Naive thymus-derived CD8-positive, alpha-beta T cell (primary cell): ENCODE measurements at regions of chr1 and their contacts with region 1.

Region 1: DNA sequence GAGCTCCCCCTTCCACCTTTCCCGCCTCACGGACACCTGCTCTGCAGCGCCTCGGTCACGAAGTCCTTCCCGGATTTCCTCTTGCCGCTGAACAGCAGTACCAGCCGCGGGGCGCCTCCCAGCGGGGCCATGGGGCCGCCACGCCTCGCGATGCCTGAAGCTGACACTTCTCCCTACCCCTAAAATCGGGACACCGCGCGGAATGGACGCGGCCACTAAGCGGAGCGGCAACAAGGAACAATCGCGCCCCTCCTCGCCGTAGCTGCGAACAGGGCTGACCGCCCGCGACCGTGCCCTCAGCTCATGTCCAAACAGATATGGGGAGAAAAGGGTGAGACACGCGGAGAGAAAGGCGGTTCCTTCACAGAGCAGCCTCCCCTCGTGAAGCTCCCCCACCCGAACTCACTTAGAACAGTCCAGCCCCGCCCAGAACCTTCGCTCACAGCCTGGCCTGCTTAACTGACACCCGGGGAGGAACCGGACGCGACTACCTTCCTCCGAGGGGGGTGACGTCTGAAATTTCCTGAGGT is at the start of gene PMVK:
- DNase-seq: peak in 9 of 10 donors; percentile 84 to 98 (median 95)
- ATAC-seq: peak; percentile 76 to 83
- H3K4me3 Mint-ChIP-seq: peak within 1 kb of the TSS; percentile 86 to 100 (median 98)
- H3K27ac Mint-ChIP-seq: peak within 1 kb of the TSS; percentile 98 to 100 (median 99)
- H3K4me1 Mint-ChIP-seq: peaks cover 20 to 64% (median 53%) of the 10 kb centered on the region in 4 donors
- H3K27me3 Mint-ChIP-seq: no peaks in the 10 kb centered on the region
- polyA plus RNA-seq, gene PMVK: 41.0 to 45.7 (median 45.1) TPM

Region 2: GRCh38 chr1:154948079-154948478 is 11.5 kb after region 1 on chr1:
- POLR2A ChIA-PET with region 1: interaction called, 87 read pairs
- DNase-seq: no peak
- ATAC-seq: no peak
- H3K4me3 Mint-ChIP-seq: no peak overlapping the region
- H3K27ac Mint-ChIP-seq: peak overlapping the region in 4 of 10 donors; percentile 40 to 92 (median 60)
- H3K4me1 Mint-ChIP-seq: peaks cover 35 to 60% (median 56%) of the 10 kb centered on the region in 4 donors
- H3K27me3 Mint-ChIP-seq: no peaks in the 10 kb centered on the region

Region 3: GRCh38 chr1:154974063-154974807 is 37.6 kb after region 1 on chr1 and contains the start of gene CKS1B:
- POLR2A ChIA-PET with region 1: interaction called, 20 read pairs
- DNase-seq: peak; percentile 86 to 99 (median 98)
- ATAC-seq: peak; percentile 88 to 90
- H3K4me3 Mint-ChIP-seq: no peak within 1 kb of the TSS
- H3K27ac Mint-ChIP-seq: no peak within 1 kb of the TSS
- H3K4me1 Mint-ChIP-seq: peaks cover 16 to 33% (median 30%) of the 10 kb centered on the region in 4 donors
- H3K27me3 Mint-ChIP-seq: no peaks in the 10 kb centered on the region
- polyA plus RNA-seq, gene CKS1B: 58.0 to 66.6 (median 63.0) TPM

Region 4: DNA sequence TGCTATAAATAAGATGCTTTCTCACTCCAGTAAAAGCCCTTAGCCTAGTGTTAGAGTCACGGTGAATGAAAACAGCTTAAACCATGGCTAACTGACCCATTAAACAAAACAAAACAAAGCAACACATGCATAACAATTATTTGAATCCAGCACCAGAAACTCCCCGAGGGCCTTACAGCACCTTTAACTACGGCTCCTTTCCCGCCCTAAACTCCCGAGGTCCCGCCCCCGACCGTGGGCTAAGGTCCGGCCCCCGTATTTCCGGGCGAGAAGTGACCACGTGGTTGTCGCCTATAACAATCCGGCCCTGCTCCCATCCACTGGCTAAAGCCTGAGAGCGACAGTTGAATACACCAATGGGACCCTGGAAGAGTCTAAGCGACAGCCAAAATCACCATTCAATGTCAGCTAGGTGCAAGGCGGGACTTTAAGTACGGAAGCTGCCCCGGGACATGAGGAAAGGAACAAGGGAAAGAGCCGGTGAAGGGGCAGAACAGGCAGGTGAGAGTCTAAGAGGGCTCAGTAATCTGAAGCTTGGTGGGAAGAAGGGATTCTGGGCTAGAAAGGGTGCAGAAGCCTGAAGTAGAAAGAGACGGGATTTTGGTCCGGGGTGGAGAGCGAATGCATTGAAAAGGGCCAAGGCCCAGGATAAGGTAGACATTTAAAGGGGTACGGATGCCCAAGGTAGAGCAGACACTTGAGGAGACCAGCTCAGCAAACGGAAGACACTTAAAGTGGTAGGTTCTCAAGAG is 46.5 kb after region 1 on chr1 and contains the start of gene FLAD1:
- POLR2A ChIA-PET with region 1: interaction called, 13 read pairs
- DNase-seq: peak; percentile 84 to 98 (median 94)
- ATAC-seq: peak; percentile 99 to 100
- H3K4me3 Mint-ChIP-seq: no peak within 1 kb of the TSS
- H3K27ac Mint-ChIP-seq: peak within 1 kb of the TSS in 1 of 10 donors; percentile 63
- H3K4me1 Mint-ChIP-seq: peaks cover 0 to 21% (median 2%) of the 10 kb centered on the region in 4 donors
- H3K27me3 Mint-ChIP-seq: no peaks in the 10 kb centered on the region
- polyA plus RNA-seq, gene FLAD1: 30.9 to 41.8 (median 31.9) TPM

Region 5: GRCh38 chr1:155244368-155245162 is 307.9 kb after region 1 on chr1:
- POLR2A ChIA-PET with region 1: no interaction called
- DNase-seq: peak; percentile 86 to 99 (median 96)
- ATAC-seq: peak; percentile 94 to 96
- H3K4me3 Mint-ChIP-seq: peak overlapping the region; percentile 77 to 94 (median 89)
- H3K27ac Mint-ChIP-seq: peak overlapping the region; percentile 93 to 100 (median 96)
- H3K4me1 Mint-ChIP-seq: peaks cover 16 to 52% (median 42%) of the 10 kb centered on the region in 4 donors
- H3K27me3 Mint-ChIP-seq: peaks cover 0 to 5% (median 2%) of the 10 kb centered on the region in 5 donors